Right lobe of liver (tissue), 6 donors: ENCODE measurements at regions of chr12 and their contacts with region 1.

Region 1: DNA sequence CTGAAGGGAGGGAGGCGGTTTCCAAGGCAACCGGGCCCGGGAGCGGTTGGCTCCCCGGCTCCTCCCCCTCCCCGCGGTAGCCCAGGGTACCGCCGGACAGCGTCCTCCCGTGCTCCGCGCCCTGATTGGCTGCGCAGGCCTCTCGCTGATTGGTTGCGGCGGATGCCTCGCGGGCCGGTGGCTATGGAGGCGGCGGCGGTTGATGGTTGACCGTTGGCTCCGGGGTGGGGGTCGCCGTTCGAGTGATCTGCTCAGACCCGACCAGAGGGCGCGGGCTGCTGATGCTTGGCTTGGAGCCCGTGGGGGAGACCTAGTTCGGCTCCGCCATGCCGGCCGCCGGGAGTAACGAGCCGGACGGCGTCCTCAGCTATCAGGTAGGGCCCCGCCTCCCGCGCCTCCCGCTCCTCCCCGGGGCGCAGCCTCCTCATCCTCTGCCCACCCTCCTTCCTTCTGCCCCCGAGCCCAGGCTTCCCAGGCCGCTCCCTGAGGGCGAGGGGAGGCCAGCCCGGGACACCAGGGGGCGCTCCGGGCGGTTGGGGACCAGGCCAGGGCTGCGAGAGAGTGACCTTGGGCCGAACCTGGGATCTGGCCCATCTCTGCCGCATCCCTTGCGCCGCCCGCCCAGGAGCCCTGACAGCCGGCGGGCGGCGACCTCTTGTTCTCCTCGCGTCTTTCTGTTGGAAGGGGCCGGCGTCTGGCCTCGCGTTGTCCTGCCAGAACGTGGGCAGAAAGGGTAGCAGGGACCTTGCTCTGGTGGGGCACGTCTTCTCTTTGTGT is at the start of gene SLC4A8:
- DNase-seq: peak; percentile 60 to 74 (median 65)
- ATAC-seq: peak; percentile 88 to 91 (median 90)
- H3K4me3 ChIP-seq: peak within 1 kb of the TSS; percentile 26 to 37 (median 36)
- H3K27ac ChIP-seq: no peak within 1 kb of the TSS
- H3K4me1 ChIP-seq: peaks cover 0 to under 1% (median 0%) of the 10 kb centered on the region in 4 donors
- H3K27me3 ChIP-seq: peaks cover 0 to 4% of the 10 kb centered on the region in 2 donors
- CTCF ChIP-seq: peak; percentile 63 to 72 (median 69)
- POLR2A ChIP-seq: no peak
- total RNA-seq, gene SLC4A8: 0.04 to 0.55 (median 0.19) TPM

Region 2: GRCh38 chr12:51521554-51522276 is 96.9 kb after region 1 on chr12:
- intact Hi-C with region 1: loop called in 1 of 2 experiments (anchors 10 kb)
- DNase-seq: no peak
- ATAC-seq: peak; percentile 32 to 57 (median 54)
- H3K4me3 ChIP-seq: no peak overlapping the region
- H3K27ac ChIP-seq: no peak overlapping the region
- H3K4me1 ChIP-seq: no peaks in the 10 kb centered on the region
- H3K27me3 ChIP-seq: no peaks in the 10 kb centered on the region
- CTCF ChIP-seq: peak; percentile 15 to 36 (median 18)
- POLR2A ChIP-seq: no peak

Region 3: DNA sequence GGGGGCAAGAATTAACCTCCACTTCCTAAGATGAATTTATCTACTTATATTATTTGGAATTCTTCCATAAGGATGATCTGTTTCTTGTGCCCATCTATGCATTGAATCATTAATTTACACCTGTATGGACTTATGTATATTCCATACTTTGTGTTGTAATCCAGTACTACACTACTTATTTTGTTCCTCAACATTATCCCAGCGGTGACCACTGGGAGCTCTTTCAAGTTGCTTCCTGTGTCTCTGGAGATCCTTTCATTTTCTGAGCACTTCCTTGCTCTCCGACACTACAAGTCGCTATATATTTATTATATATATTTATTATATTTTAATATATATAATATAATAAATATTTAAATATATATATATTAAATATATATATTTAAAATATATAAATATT is 111.3 kb after region 1 on chr12:
- intact Hi-C with region 1: loop called in 1 of 2 experiments (anchors 5 kb)
- DNase-seq: no peak
- ATAC-seq: no peak
- H3K4me3 ChIP-seq: no peak overlapping the region
- H3K27ac ChIP-seq: no peak overlapping the region
- H3K4me1 ChIP-seq: no peaks in the 10 kb centered on the region
- H3K27me3 ChIP-seq: no peaks in the 10 kb centered on the region
- CTCF ChIP-seq: no peak
- POLR2A ChIP-seq: no peak

Region 4: DNA sequence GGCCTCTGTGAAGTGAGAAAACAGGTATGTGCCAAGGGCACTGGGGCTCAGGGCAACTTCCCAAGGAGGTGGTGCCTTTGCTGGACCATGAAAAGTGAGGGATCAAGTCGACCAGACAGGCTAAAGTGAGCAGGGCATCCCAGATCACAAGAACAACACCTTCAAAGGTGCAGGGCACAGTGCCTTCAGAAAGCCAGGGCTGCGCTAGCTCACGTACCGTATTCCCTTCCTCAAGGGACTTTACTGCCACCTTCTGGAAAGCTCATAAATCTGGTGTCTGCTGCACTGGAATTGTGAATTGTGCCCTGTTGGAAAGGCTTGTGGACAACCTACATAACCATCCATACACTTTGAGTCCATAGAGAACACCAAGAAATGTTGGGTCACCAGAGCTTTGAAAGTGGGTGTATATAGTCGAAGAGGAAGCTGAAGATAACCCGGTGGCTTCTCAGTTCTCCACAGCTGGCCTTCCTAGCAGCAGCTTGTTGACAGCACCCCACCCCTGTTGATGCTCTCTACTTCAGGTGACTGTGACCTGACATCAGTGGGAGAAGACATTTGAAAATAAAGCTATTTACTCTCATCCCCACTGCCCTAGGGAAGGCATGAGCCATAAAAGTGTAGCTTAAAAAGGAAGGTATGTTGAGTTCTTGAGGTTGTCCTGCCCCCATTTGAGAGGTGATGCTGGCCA is 399.2 kb after region 1 on chr12:
- intact Hi-C with region 1: loop called (anchors 5 to 10 kb)
- DNase-seq: no peak
- ATAC-seq: peak; percentile 59 to 80 (median 74)
- H3K4me3 ChIP-seq: no peak overlapping the region
- H3K27ac ChIP-seq: no peak overlapping the region
- H3K4me1 ChIP-seq: peaks cover 0 to 8% (median 2%) of the 10 kb centered on the region in 4 donors
- H3K27me3 ChIP-seq: no peaks in the 10 kb centered on the region
- CTCF ChIP-seq: peak; percentile 51 to 69 (median 60)
- POLR2A ChIP-seq: no peak

Region 5: GRCh38 chr12:51926718-51927117 is 501.9 kb after region 1 on chr12:
- intact Hi-C with region 1: no loop called
- DNase-seq: peak in 2 of 3 donors; percentile 58 to 75
- ATAC-seq: peak; percentile 41 to 62 (median 55)
- H3K4me3 ChIP-seq: no peak overlapping the region
- H3K27ac ChIP-seq: peak overlapping the region in 2 of 3 donors; percentile 34 to 59
- H3K4me1 ChIP-seq: peaks cover 0 to 29% (median 14%) of the 10 kb centered on the region in 4 donors
- H3K27me3 ChIP-seq: no peaks in the 10 kb centered on the region
- CTCF ChIP-seq: peak; percentile 66 to 80 (median 76)
- POLR2A ChIP-seq: no peak